ENCODE measurements at regions of chr6 and their contacts with region 1.

Region 1: DNA sequence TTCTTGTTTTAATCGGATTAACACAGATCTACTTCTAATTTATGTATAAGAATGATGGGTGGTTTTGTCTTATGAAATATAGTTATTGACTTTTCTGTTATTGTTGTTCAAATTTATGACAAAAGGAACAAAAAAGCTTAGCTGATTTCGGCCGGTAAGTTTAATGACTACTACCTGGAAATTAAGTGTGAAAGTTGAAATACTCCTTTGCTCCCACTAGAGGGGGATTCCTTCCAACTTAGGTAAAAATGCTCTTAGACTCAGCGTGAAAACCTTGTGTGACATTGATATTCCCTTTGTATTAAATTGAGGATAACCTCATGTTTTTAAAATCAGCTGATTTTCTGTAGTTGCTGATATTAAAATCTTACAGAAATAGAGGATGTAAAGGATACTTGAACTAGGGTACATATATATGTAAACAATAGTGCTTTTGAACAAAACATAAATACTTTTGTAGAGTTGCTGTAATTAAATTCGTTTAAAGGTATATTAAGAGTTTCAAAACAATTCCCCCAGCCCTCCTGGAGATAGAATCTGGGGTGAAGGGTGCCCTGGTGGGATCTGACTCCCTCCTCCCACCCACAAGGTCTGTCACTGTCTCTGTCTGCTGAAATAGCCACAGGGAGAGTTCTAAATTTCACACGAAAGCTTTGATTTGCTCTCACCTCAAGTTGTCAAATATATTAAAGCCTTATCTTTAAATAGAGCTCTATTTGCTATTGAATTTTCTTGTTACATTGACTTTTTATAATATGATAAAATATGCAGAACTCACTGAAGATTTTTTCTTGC is 257.5 kb downstream of the ARID1B start:
- DNase-seq: no peak
- ATAC-seq: peak; percentile 59
- H3K4me3 Mint-ChIP-seq: peak overlapping the region; percentile 49
- H3K27ac Mint-ChIP-seq: peak overlapping the region; percentile 52
- H3K4me1 Mint-ChIP-seq: peaks cover 29% of the 10 kb centered on the region
- H3K27me3 Mint-ChIP-seq: no peaks in the 10 kb centered on the region

Region 2: GRCh38 chr6:157045831-157046454 is 11.3 kb after region 1 on chr6:
- CTCF ChIA-PET with region 1: interaction called, 32 read pairs
- POLR2A ChIA-PET with region 1: no interaction called
- intact Hi-C with region 1: no loop called
- DNase-seq: no peak
- ATAC-seq: no peak
- H3K4me3 Mint-ChIP-seq: no peak overlapping the region
- H3K27ac Mint-ChIP-seq: no peak overlapping the region
- H3K4me1 Mint-ChIP-seq: peaks cover 9% of the 10 kb centered on the region
- H3K27me3 Mint-ChIP-seq: no peaks in the 10 kb centered on the region

Region 3: DNA sequence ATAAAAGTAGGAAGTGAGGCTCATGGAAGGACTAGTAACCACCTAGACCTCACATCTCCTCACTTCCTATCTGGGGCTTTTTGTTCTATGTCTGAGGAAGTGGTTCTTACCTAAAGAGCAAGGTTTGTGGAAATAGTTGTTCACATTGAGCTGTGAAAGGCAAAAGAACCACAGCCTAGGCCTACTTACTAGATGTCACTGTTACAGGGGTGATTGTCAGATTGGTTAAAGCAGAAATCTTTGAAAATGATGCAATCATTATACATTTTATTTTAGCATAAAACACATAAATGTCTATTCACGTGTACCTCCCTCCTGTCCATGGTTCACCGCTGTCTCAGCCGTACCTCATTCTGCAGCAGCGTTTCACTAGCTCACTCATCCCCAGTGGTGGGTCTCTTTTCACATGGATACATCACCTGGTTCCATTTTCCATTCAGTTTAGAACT is 19.9 kb after region 1 on chr6:
- CTCF ChIA-PET with region 1: interaction called, 4 read pairs
- POLR2A ChIA-PET with region 1: no interaction called
- intact Hi-C with region 1: loop called in 1 of 2 experiments (anchors 1 kb)
- DNase-seq: peak; percentile 49
- ATAC-seq: peak; percentile 80
- H3K4me3 Mint-ChIP-seq: peak overlapping the region; percentile 15
- H3K27ac Mint-ChIP-seq: peak overlapping the region; percentile 89
- H3K4me1 Mint-ChIP-seq: peaks cover 41% of the 10 kb centered on the region
- H3K27me3 Mint-ChIP-seq: no peaks in the 10 kb centered on the region

Region 4: GRCh38 chr6:157148391-157149323 is 114.0 kb after region 1 on chr6:
- CTCF ChIA-PET with region 1: no interaction called
- POLR2A ChIA-PET with region 1: no interaction called
- intact Hi-C with region 1: no loop called
- DNase-seq: no peak
- ATAC-seq: no peak
- H3K4me3 Mint-ChIP-seq: no peak overlapping the region
- H3K27ac Mint-ChIP-seq: no peak overlapping the region
- H3K4me1 Mint-ChIP-seq: peaks cover 17% of the 10 kb centered on the region
- H3K27me3 Mint-ChIP-seq: no peaks in the 10 kb centered on the region

Measured in activated CD4-positive, alpha-beta T cell treated with anti-CD3 and anti-CD28 coated beads for 36 hours (primary cell).